Right ventricle myocardium inferior (tissue), 1 donor: ENCODE measurements at regions of chr5 and their contacts with region 1.

Region 1: GRCh38 chr5:39547553-39548154 is 122.9 kb upstream of the DAB2 start:
- DNase-seq: no peak
- ATAC-seq: peak; percentile 66

Region 2: DNA sequence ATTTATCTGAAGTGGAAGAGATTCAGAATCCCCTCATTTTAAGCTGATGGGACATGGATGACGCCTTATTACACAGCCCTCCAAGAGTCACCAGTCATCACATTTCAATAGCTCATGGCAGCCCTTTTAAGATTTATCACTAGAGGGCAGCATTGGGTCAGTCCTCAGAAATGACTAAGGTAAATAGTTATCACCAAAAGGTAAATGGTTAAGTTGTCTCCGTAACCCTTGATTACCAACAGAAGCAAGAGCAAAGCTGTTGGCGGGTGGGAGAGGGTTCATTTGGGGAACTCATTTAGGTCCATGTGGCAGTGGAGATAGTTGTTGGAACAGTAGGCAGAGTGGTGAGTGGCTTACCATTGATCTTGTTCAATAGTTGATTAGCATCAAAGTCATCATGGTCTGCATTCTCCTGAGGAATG is 171.3 kb before region 1 on chr5:
- intact Hi-C with region 1: loop called (anchors 1 kb)
- DNase-seq: no peak
- ATAC-seq: peak; percentile 38

Region 3: GRCh38 chr5:39503146-39503545 is 44.5 kb before region 1 on chr5:
- intact Hi-C with region 1: loop called (anchors 2 kb)
- DNase-seq: peak; percentile 57
- ATAC-seq: peak; percentile 77

Region 4: DNA sequence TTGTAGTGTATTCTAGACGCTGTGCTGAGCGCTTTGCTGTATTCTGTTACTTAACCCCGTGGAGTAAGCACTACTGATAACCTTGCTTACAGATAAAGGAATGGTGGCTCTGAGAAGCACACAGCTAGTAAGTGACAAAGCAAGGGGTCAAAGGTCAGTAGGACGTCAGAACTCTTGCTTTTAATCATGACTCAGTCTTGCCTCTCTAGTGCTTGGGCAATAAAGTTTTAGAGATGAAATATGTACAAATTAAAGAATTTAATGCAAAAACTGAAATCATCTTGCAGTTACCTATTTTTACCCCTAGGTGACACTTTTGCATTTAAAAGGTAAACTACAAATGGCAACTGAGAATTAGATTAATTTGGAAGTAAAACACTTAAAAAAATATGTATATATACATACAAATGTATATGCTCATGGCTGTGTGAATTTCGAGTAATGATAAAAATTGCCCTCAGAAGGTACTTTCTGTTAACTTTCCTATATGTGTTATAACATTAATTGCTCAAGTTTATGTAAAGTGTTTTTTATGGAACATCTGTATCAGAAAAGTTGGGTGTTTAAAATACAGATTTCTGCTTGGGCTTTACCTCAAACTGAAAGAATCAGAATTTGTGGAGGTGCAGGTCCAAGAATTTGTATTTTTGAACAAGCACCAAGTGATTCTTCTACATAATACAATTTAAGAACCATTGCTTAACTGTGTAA is 52.2 kb after region 1 on chr5:
- intact Hi-C with region 1: no loop called
- DNase-seq: no peak
- ATAC-seq: no peak